Esophagus muscularis mucosa (tissue), 4 donors: ENCODE measurements at regions of chr14 and their contacts with region 1.

Region 1: DNA sequence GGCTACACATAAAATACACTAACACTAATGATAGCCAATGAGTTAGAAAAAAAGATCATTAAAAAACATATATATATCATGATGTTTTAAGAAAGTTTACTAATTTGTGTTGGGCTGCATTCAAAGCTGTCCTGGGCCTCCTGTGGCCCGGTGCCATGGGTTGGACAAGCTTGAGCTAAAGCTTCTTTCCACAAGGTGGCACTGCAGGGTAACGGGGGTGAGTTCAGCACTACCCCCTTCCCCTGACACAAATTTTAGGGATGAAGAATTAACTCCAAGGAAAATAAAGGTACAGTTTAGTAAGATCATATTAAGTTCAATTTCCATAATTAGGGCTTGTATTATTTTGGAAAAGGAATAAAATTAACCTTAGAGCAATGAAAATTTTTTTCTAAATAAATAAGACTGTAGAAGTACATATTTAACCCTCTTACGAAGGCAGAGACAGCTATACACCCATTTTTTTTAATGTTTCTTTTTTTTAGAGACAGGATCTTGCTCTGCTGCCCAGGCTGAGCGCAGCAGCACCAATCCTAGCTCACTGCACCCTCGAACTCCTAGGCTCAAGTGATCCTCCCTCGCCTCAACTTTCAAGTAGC is 38.9 kb downstream of the PPP1R13B start:
- DNase-seq: peak; percentile 92
- H3K4me3 ChIP-seq: no peak overlapping the region
- H3K27ac ChIP-seq: no peak overlapping the region
- H3K4me1 ChIP-seq: peaks cover 29 to 46% (median 34%) of the 10 kb centered on the region in 4 donors
- H3K27me3 ChIP-seq: no peaks in the 10 kb centered on the region
- CTCF ChIP-seq: peak; percentile 85 to 90 (median 89)
- EP300 ChIP-seq: no peak
- POLR2A ChIP-seq: no peak

Region 2: GRCh38 chr14:103847451-103848188 is 39.1 kb after region 1 on chr14 and contains the start of gene PPP1R13B:
- intact Hi-C with region 1: loop called (anchors 5 kb)
- DNase-seq: peak; percentile 95
- H3K4me3 ChIP-seq: peak within 1 kb of the TSS; percentile 74 to 94 (median 81)
- H3K27ac ChIP-seq: peak within 1 kb of the TSS; percentile 83 to 88 (median 84)
- H3K4me1 ChIP-seq: peaks cover 22 to 29% (median 27%) of the 10 kb centered on the region in 4 donors
- H3K27me3 ChIP-seq: no peaks in the 10 kb centered on the region
- CTCF ChIP-seq: peak in 1 of 3 experiments; percentile 6
- EP300 ChIP-seq: no peak
- POLR2A ChIP-seq: no peak
- total RNA-seq, gene PPP1R13B: 19.9 to 25.2 (median 23.6) TPM

Region 3: DNA sequence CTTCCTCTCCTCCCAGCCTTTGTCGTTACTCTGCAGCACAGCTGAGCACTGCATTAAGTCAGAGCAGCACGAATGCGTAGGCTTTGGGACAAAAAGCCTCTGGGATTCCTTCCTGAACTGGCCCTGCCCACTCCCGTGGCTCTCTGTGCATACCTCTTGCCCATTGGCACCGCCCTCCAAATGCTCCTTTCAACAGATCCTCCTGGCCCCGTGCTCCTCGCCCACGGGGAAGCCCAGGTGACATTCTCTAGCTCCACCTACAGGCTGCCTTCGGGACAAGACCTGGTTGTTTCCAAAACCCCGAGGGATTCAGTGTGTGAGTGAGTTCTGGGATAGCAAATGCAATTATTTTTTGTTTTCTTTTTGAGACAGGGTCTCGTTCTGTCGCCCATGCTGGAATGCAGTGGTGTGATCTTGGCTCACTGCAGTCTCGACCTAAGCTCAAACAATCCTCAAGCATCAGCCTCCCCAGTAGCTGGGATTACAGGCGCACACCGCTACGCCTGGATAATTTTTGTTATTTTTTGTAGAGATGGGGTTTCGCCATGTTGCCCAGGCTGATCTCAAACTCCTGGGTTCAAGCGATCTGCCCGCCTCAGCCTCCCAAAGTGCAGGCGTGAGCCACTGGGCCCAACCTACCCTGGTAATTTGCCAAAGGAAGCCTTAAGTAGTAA is 101.9 kb after region 1 on chr14:
- intact Hi-C with region 1: loop called (anchors 2 kb)
- DNase-seq: no peak
- H3K4me3 ChIP-seq: peak overlapping the region in 3 of 4 donors; percentile 9 to 33 (median 33)
- H3K27ac ChIP-seq: peak overlapping the region; percentile 36 to 67 (median 52)
- H3K4me1 ChIP-seq: peaks cover 12 to 18% (median 14%) of the 10 kb centered on the region in 4 donors
- H3K27me3 ChIP-seq: no peaks in the 10 kb centered on the region
- CTCF ChIP-seq: peak; percentile 74 to 88 (median 80)
- EP300 ChIP-seq: no peak
- POLR2A ChIP-seq: no peak

Region 4: DNA sequence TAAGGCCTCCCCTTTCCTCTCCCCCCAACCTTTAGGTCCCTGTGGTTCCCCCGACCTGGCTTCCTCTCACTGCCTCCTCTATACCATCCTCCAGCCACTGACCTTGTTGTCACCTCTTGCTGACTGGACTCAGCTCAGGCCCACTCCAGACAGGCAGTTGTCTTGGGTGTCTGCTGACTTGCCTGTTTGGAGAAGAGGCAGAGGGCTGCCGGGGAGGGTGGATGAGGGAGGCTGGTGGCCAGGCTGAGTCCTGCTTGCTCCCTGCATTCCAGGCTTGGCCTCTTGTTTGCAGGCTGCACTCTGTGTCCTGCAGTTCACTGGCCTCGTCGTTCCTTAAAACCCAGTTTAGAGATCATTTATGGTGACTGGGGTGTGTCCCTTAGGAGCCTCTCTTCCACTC is 164.9 kb after region 1 on chr14:
- intact Hi-C with region 1: loop called (anchors 5 kb)
- DNase-seq: no peak
- H3K4me3 ChIP-seq: no peak overlapping the region
- H3K27ac ChIP-seq: no peak overlapping the region
- H3K4me1 ChIP-seq: no peaks in the 10 kb centered on the region
- H3K27me3 ChIP-seq: peaks cover 0 to 4% (median 0%) of the 10 kb centered on the region in 4 donors
- CTCF ChIP-seq: no peak
- EP300 ChIP-seq: no peak
- POLR2A ChIP-seq: no peak